ENCODE measurements at regions of chr2 and their contacts with region 1.

Region 1: GRCh38 chr2:12326449-12327190 is 390.1 kb upstream of the TRIB2 start:
- DNase-seq: peak in 5 of 14 experiments; percentile 3 to 49 (median 37)
- ATAC-seq: no peak
- H3K4me3 ChIP-seq: no peak overlapping the region
- H3K4me3 Mint-ChIP-seq: no peak overlapping the region
- H3K27ac ChIP-seq: no peak overlapping the region
- H3K27ac Mint-ChIP-seq: no peak overlapping the region
- H3K4me1 ChIP-seq: no peaks in the 10 kb centered on the region
- H3K4me1 Mint-ChIP-seq: no peaks in the 10 kb centered on the region
- H3K27me3 ChIP-seq: no peaks in the 10 kb centered on the region
- H3K27me3 Mint-ChIP-seq: no peaks in the 10 kb centered on the region
- CTCF ChIP-seq: peak; percentile 21

Region 2: GRCh38 chr2:11863513-11864328 is 462.9 kb before region 1 on chr2:
- CTCF ChIA-PET with region 1: no interaction called
- POLR2A ChIA-PET with region 1: no interaction called
- intact Hi-C with region 1: loop called in 1 of 2 experiments (anchors 1 kb)
- DNase-seq: peak; percentile 50 to 86 (median 58)
- ATAC-seq: peak; percentile 83
- H3K4me3 ChIP-seq: peak overlapping the region; percentile 24
- H3K4me3 Mint-ChIP-seq: peak overlapping the region; percentile 18
- H3K27ac ChIP-seq: no peak overlapping the region
- H3K27ac Mint-ChIP-seq: no peak overlapping the region
- H3K4me1 ChIP-seq: peaks cover 15% of the 10 kb centered on the region
- H3K4me1 Mint-ChIP-seq: peaks cover 18% of the 10 kb centered on the region
- H3K27me3 ChIP-seq: no peaks in the 10 kb centered on the region
- H3K27me3 Mint-ChIP-seq: no peaks in the 10 kb centered on the region
- CTCF ChIP-seq: peak; percentile 97

Region 3: DNA sequence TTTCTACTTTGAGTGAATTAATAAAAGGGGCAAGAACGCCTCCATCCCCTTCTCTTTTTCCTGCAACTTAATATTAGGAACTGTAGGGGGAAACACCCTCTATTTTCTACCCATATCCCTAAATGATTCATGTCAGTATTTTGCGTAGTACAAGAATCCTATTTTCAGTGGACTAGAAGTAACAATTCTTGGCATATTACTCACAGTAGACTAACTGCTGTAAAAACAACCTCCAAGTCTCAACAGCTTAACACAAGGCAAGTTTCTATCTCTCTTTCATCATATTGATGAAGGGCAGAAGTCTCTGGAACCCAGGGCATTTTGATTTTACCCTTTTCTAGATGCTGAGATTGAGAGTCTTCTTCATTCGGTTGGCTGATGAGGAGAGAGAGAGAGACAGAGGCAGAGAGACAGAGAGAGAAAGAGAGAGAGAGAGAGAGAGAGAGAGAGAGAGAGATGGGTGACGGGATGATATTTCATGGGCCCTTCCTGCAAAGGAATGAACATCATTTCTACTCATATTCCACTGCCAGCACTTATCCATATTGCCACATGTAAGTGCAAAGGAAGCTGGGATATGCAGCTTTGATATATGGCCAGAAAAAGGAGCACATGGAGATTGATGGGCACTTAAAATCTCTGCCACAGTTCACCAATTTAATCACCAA is 98.5 kb before region 1 on chr2:
- CTCF ChIA-PET with region 1: no interaction called
- POLR2A ChIA-PET with region 1: no interaction called
- intact Hi-C with region 1: no loop called
- DNase-seq: no peak
- ATAC-seq: no peak
- H3K4me3 ChIP-seq: no peak overlapping the region
- H3K4me3 Mint-ChIP-seq: no peak overlapping the region
- H3K27ac ChIP-seq: no peak overlapping the region
- H3K27ac Mint-ChIP-seq: no peak overlapping the region
- H3K4me1 ChIP-seq: no peaks in the 10 kb centered on the region
- H3K4me1 Mint-ChIP-seq: no peaks in the 10 kb centered on the region
- H3K27me3 ChIP-seq: no peaks in the 10 kb centered on the region
- H3K27me3 Mint-ChIP-seq: no peaks in the 10 kb centered on the region
- CTCF ChIP-seq: no peak

Measured in CD4-positive, alpha-beta T cell (primary cell).